GM13976 (cell line): ENCODE measurements at regions of chr13 and their contacts with region 1.

Region 1: GRCh38 chr13:29508130-29508875 is 87.2 kb downstream of the SLC7A1 start:
- DNase-seq: peak; percentile 89
- CTCF ChIP-seq: peak; percentile 97

Region 2: DNA sequence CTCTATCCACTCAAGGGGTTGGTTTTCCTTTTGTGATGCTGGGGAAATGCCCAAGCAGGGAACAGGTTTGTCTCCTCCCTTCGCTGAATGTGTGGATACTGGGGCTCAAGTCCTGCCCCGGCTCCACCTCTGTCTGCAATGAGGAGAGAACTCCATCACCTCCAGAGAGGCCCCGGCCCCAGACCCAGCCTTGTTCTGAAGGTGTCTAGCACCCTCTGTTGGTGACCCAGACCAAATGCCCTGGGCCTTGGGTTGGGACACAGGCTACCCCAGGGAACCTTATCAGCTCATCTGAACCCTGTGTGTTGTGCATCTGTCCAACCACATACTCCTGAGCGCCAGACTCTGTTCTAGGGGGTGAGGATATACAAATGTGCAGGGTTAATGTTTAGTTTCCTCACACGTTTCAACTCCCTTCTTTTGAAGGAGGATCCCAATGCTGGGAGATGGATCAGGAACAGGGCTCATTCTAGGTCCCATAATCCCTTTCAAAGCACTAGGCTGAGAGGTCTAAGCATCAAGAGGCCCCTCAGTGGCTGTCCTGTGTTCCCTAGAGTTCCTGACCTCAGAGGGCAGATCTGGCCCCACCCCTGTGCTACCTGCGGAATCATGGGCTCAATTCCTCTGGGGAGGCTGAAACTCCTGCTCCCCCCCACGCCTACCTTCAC is 199.7 kb after region 1 on chr13:
- in situ Hi-C with region 1: loop called (anchors 10 kb)
- DNase-seq: peak; percentile 56
- CTCF ChIP-seq: peak; percentile 64

Region 3: GRCh38 chr13:30114571-30115256 is 606.4 kb after region 1 on chr13:
- in situ Hi-C with region 1: loop called (anchors 10 kb)
- DNase-seq: peak; percentile 89
- CTCF ChIP-seq: peak; percentile 90